ENCODE measurements at regions of chr2 and their contacts with region 1.

Region 1: DNA sequence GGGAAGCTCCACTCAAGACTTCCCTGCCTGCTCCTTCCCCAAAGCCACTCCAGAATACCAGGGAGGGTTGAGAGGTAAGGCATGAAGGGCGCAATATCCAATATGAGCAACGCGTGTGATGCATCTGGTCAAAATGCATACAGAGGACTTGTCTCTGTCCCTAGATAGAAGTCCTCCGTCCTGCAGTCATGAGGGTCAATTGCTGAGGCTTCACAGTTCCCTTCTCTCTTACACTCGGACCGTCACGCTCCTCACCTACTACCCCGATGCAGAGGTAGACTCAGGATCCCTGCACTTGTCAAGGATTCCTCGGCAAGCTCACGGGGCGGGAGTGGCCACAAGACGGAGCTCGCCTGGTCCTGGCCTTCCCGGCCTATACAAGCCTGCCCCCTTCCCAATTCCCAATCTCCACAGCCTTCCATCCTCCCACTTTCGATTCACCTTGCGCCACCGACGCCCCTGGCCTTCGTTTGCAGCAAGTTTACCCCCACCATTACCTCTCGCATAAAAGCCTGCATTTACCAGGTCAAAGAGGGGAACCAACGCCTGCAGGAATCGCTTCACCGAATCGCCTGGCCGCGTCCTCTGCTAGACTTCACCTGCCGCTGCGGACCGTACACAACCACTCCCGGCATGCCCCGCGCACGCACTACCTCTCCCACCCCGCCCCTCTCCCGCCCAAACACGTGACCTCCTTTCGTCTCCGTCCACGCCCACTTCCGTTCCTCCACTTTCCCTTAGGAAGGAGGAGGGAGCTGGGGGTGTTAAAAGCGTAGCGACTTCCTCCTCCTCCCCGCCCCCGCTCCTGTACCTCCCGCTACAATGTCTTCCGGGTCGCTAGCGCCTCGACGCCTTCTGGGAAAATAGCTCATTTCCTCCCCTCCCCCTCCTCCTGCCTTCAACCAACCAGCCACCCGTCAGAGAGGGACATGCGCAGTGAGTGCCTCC is at the start of gene ORC4:
- DNase-seq: peak; percentile 100
- ATAC-seq: peak; percentile 89
- H3K4me3 ChIP-seq: peak within 1 kb of the TSS; percentile 88 to 97 (median 93)
- H3K27ac ChIP-seq: peak within 1 kb of the TSS; percentile 82
- H3K4me1 ChIP-seq: peaks cover 57% of the 10 kb centered on the region
- H3K27me3 ChIP-seq: peaks cover 0 to 6% of the 10 kb centered on the region in 2 experiments; a peak in 1 of 5 replicates
- CTCF ChIP-seq: peak; percentile 89
- EP300 ChIP-seq: peak in 1 of 2 experiments; percentile 64; a peak in 1 of 4 replicates
- POLR2A ChIP-seq: peak; percentile 94 to 99
- RAD21 ChIP-seq: peak; percentile 79; the same call in 1 of the 2 replicates
- total RNA-seq, gene ORC4: 84.8 and 135 TPM in 2 replicates

Region 2: GRCh38 chr2:147925886-147926285 is 94.5 kb before region 1 on chr2:
- CTCF ChIA-PET with region 1: no interaction called
- POLR2A ChIA-PET with region 1: interaction called, 11 read pairs
- in situ Hi-C with region 1: no loop called
- intact Hi-C with region 1: loop called (anchors 2 kb)
- DNase-seq: no peak
- ATAC-seq: no peak
- H3K4me3 ChIP-seq: no peak overlapping the region
- H3K27ac ChIP-seq: peak overlapping the region; percentile 89
- H3K4me1 ChIP-seq: peaks cover 50% of the 10 kb centered on the region
- H3K27me3 ChIP-seq: no peaks in the 10 kb centered on the region
- CTCF ChIP-seq: no peak
- EP300 ChIP-seq: no peak
- POLR2A ChIP-seq: no peak
- RAD21 ChIP-seq: no peak

Region 3: GRCh38 chr2:148136430-148136829 is 116.0 kb after region 1 on chr2:
- CTCF ChIA-PET with region 1: no interaction called
- POLR2A ChIA-PET with region 1: no interaction called
- in situ Hi-C with region 1: no loop called
- intact Hi-C with region 1: no loop called
- DNase-seq: no peak
- ATAC-seq: no peak
- H3K4me3 ChIP-seq: no peak overlapping the region
- H3K27ac ChIP-seq: no peak overlapping the region
- H3K4me1 ChIP-seq: no peaks in the 10 kb centered on the region
- H3K27me3 ChIP-seq: no peaks in the 10 kb centered on the region
- CTCF ChIP-seq: no peak
- EP300 ChIP-seq: no peak
- POLR2A ChIP-seq: no peak
- RAD21 ChIP-seq: no peak

Region 4: GRCh38 chr2:148201075-148202004 is 181.0 kb after region 1 on chr2:
- CTCF ChIA-PET with region 1: no interaction called
- POLR2A ChIA-PET with region 1: interaction called, 3 read pairs
- in situ Hi-C with region 1: no loop called
- intact Hi-C with region 1: loop called (anchors 1 kb)
- DNase-seq: peak; percentile 87
- ATAC-seq: peak; percentile 100
- H3K4me3 ChIP-seq: no peak overlapping the region
- H3K27ac ChIP-seq: no peak overlapping the region
- H3K4me1 ChIP-seq: peaks cover 11% of the 10 kb centered on the region
- H3K27me3 ChIP-seq: no peaks in the 10 kb centered on the region
- CTCF ChIP-seq: peak; percentile 98
- EP300 ChIP-seq: no peak
- POLR2A ChIP-seq: no peak
- RAD21 ChIP-seq: peak; percentile 92

Region 5: DNA sequence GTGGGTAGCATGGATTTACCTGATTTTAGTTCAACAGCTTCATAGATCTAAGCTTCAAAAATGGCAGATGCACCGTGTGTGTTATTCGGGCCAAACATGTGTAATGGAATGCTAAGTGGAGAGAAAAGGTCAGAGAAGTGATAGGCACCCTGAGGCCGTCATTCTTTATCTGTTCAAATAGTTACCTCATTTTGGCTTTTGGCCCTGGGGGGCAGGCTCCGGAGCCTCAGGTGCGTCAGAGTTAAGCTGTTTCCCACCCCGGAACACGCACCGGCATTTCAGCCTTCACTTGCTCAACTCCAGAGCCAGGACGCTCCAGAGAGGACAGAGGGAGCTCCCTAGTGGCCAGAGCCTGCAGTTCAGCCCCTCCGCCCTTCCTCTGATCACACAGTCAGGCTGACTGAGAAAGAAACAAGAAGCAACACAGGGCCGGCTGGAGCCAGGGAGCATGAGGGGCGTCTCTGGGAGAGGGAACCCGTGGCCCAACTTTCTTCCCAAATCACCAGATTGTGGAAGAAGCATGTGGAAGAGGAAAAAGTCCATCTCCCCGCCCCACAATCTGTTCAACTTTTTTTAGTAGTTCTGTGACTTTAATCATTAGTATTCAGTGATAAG is 489.0 kb after region 1 on chr2:
- CTCF ChIA-PET with region 1: no interaction called
- POLR2A ChIA-PET with region 1: interaction called, 25 read pairs
- in situ Hi-C with region 1: no loop called
- intact Hi-C with region 1: loop called (anchors 1 kb)
- DNase-seq: peak; percentile 90
- ATAC-seq: peak; percentile 99
- H3K4me3 ChIP-seq: peak overlapping the region; percentile 53 to 68 (median 55)
- H3K27ac ChIP-seq: peak overlapping the region; percentile 60
- H3K4me1 ChIP-seq: peaks cover 24% of the 10 kb centered on the region
- H3K27me3 ChIP-seq: no peaks in the 10 kb centered on the region
- CTCF ChIP-seq: peak; percentile 99
- EP300 ChIP-seq: peak; percentile 50 to 62; a peak in 2 of 4 replicates
- POLR2A ChIP-seq: peak in 1 of 2 experiments; percentile 51; a peak in 2 of 4 replicates
- RAD21 ChIP-seq: peak; percentile 97

Region 6: GRCh38 chr2:149587220-149587949 is 1567.0 kb after region 1 on chr2 and contains the start of gene MMADHC:
- CTCF ChIA-PET with region 1: no interaction called
- POLR2A ChIA-PET with region 1: interaction called, 4 read pairs
- in situ Hi-C with region 1: no loop called
- intact Hi-C with region 1: loop called (anchors 5 kb)
- DNase-seq: peak; percentile 97
- ATAC-seq: peak; percentile 96
- H3K4me3 ChIP-seq: peak within 1 kb of the TSS; percentile 83 to 88 (median 83)
- H3K27ac ChIP-seq: peak within 1 kb of the TSS; percentile 97
- H3K4me1 ChIP-seq: peaks cover 47% of the 10 kb centered on the region
- H3K27me3 ChIP-seq: no peaks in the 10 kb centered on the region; a peak in 1 of 5 replicates
- CTCF ChIP-seq: no peak
- EP300 ChIP-seq: peak; percentile 19 to 37; a peak in 1 of 4 replicates
- POLR2A ChIP-seq: peak; percentile 88 to 95
- RAD21 ChIP-seq: peak; percentile 28; the same call in 1 of the 2 replicates
- total RNA-seq, gene MMADHC: 210 and 304 TPM in 2 replicates

Measured in HepG2 (cell line).